ENCODE measurements at regions of chr17 and their contacts with region 1.

Region 1: DNA sequence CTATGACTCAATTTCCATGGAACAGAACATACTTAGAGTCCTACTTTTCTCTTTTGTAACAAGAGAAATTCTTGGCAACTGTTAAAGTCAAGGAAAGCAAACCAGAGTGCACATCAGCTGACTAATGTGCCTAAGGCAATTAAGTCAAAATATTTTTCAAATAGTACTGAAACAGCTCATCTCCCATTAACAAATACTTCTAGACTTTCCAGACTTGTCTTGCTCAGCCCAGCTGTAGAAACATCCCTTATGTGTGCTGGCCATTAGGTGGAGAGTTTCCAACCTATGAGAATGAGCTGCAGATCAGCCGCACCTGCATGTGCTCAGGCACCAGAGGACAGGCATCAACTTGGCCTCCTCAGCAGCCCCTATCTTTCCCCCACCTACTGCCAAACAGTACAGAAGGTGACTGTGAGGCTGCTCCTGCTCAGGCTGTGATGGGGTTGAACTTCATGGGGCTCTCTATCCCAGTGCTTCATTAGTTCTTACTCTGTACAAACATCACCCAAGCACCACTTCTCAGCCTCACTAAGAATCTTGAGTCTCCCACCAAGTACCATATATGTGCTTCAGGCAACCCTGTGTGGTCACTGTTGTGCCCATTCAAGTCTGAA is 32.2 kb downstream of the TEX2 start:
- DNase-seq: peak; percentile 96
- H3K4me3 ChIP-seq: no peak overlapping the region
- H3K27me3 ChIP-seq: no peaks in the 10 kb centered on the region
- CTCF ChIP-seq: no peak

Region 2: DNA sequence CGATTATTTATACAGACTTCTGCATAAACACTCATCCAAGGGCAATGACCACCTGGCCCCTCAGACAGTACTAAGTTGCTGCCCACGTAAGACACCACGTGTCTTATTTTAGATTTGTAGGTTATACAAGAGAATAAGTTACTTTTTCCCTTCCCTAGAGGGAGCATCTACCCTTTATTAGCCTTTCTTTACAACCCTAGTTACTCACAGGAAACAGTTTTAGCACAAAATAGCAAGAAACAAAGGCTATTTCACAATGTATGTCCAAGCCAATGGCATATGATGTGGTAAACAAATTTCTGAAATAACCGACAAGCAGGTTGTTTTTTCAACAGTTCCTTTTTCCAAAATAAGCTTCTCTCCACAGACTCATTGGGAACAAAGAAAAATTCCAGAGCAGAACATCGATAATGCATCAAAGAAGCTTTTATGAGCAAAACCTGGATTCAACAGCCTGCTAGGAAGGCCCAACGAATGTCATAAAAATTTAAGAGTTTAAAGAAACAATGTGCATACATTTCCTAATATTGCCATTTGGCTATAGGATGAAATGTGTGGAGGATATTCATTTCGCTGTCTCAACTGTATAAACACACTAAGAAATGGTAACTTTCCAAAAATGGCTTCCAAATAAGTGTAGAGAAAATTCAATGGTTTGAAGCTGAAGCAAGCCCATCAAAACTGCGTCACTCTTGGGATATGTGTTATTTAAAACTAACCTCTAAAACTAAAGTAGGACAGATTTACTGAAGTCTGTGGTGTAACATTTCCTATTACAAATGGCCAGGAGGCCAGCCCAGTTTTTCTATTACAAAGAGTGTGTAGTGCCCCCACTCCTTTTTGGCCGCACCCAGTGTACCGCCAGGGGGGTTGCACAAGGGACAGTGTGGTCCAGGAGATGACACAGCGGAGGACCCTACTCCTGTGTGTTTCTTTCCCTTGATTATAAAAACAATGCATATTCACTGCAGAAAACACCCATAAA is 50.5 kb before region 1 on chr17:
- CTCF ChIA-PET with region 1: interaction called, 11 read pairs
- POLR2A ChIA-PET with region 1: no interaction called
- DNase-seq: no peak
- H3K4me3 ChIP-seq: no peak overlapping the region
- H3K27me3 ChIP-seq: no peaks in the 10 kb centered on the region
- CTCF ChIP-seq: peak; percentile 43

Measured in BJ (cell line).